WTC11 (cell line): ENCODE measurements at regions of chr12 and their contacts with region 1.

Region 1: GRCh38 chr12:110431957-110432587 is 18.1 kb downstream of the ARPC3 start:
- DNase-seq: no peak
- ATAC-seq: no peak
- H3K4me3 Mint-ChIP-seq: no peak overlapping the region
- H3K27ac Mint-ChIP-seq: no peak overlapping the region
- H3K4me1 Mint-ChIP-seq: no peaks in the 10 kb centered on the region
- H3K27me3 Mint-ChIP-seq: no peaks in the 10 kb centered on the region
- CTCF ChIP-seq: no peak

Region 2: GRCh38 chr12:110280779-110281548 is 151.1 kb before region 1 on chr12 and contains the start of gene ATP2A2:
- CTCF ChIA-PET with region 1: interaction called, 13 read pairs
- POLR2A ChIA-PET with region 1: no interaction called
- DNase-seq: peak; percentile 80
- ATAC-seq: peak; percentile 80
- H3K4me3 Mint-ChIP-seq: peak within 1 kb of the TSS; percentile 89
- H3K27ac Mint-ChIP-seq: peak within 1 kb of the TSS; percentile 73
- H3K4me1 Mint-ChIP-seq: peaks cover 51% of the 10 kb centered on the region
- H3K27me3 Mint-ChIP-seq: peaks cover 13% of the 10 kb centered on the region
- CTCF ChIP-seq: no peak
- total RNA-seq, gene ATP2A2: 216 to 239 TPM (median 216 TPM) in 3 replicates

Region 3: DNA sequence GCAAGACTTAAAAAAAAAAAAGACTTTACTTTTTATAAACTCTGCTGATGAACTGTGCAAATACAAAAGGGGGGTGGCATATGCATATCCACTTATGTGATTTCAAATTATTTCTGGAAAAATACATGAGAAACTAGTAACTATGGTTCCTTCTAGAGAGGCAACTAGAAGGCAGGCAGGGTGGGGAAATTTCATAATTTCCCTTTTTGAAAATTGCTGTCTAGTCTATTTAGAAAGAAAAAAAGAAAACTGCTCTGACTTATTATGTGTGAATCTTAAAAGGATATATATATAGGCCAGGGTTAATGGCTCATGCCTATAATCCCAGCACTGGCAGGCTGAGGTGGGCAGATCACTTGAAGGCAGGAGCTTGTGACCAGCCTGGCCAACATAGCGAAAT is 70.9 kb before region 1 on chr12:
- CTCF ChIA-PET with region 1: interaction called, 29 read pairs
- POLR2A ChIA-PET with region 1: no interaction called
- DNase-seq: no peak
- ATAC-seq: no peak
- H3K4me3 Mint-ChIP-seq: no peak overlapping the region
- H3K27ac Mint-ChIP-seq: no peak overlapping the region
- H3K4me1 Mint-ChIP-seq: no peaks in the 10 kb centered on the region
- H3K27me3 Mint-ChIP-seq: no peaks in the 10 kb centered on the region
- CTCF ChIP-seq: no peak

Region 4: DNA sequence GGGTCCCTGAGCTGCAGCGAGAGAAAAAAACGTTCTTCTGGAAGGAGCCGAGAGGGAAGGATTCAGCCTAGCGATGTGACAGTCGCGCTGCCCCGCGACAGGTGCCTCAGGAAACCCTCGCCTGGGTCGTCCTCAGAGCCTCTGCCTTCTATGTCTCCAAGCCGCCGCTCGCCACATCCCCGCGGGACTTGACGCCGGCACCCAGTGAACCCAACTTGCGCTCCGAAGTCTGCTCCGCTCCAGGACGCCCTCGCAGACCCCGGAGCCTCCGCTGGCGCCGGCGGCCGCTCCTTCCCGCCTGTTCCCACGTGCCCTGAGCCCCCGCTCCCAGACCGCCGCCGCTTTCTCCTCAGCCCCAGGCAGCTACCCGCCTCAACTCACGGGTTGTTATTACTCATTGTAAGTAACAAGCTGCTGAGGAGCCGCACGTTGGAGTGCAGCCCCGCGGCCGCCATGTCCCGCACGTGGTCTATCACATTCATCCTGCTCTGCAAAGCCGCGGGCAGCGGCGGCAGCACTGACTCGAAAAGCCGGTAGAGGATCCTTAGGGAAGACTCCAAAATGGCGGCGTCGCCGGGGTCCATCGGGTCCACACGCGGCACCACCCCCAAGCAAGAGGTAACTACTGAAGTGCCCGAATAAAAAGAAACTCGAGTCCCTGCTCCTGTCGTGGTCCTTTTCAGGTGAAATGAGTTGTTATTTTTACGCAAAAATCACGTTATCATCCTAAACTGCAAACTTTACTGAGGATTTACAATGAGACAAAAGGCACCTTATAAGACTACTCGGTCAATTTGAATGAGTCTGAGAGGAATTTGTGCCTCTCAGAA is 28.7 kb before region 1 on chr12 and contains the start of gene ANAPC7:
- CTCF ChIA-PET with region 1: interaction called, 39 read pairs
- POLR2A ChIA-PET with region 1: interaction called, 10 read pairs
- DNase-seq: peak; percentile 91
- ATAC-seq: peak; percentile 94
- H3K4me3 Mint-ChIP-seq: peak within 1 kb of the TSS; percentile 98
- H3K27ac Mint-ChIP-seq: peak within 1 kb of the TSS; percentile 100
- H3K4me1 Mint-ChIP-seq: peaks cover 6% of the 10 kb centered on the region
- H3K27me3 Mint-ChIP-seq: no peaks in the 10 kb centered on the region
- CTCF ChIP-seq: no peak
- total RNA-seq, gene ANAPC7: 82.8 to 93.4 TPM (median 87.0 TPM) in 3 replicates

Region 5: GRCh38 chr12:110468212-110469048 is 36.4 kb after region 1 on chr12 and contains the starts of genes FAM216A and GPN3:
- CTCF ChIA-PET with region 1: interaction called, 20 read pairs
- POLR2A ChIA-PET with region 1: interaction called, 3 read pairs
- DNase-seq: peak; percentile 97
- ATAC-seq: peak; percentile 87
- H3K4me3 Mint-ChIP-seq: peak within 1 kb of the TSS; percentile 100
- H3K27ac Mint-ChIP-seq: peak within 1 kb of the TSS; percentile 100
- H3K4me1 Mint-ChIP-seq: peaks cover 22% of the 10 kb centered on the region
- H3K27me3 Mint-ChIP-seq: no peaks in the 10 kb centered on the region
- CTCF ChIP-seq: no peak
- total RNA-seq, gene FAM216A: 16.9 to 20.2 TPM (median 19.7 TPM) in 3 replicates
- total RNA-seq, gene GPN3: 46.4 to 53.0 TPM (median 51.2 TPM) in 3 replicates